Sigmoid colon (tissue), 7 donors: ENCODE measurements at regions of chr3 and their contacts with region 1.

Region 1: DNA sequence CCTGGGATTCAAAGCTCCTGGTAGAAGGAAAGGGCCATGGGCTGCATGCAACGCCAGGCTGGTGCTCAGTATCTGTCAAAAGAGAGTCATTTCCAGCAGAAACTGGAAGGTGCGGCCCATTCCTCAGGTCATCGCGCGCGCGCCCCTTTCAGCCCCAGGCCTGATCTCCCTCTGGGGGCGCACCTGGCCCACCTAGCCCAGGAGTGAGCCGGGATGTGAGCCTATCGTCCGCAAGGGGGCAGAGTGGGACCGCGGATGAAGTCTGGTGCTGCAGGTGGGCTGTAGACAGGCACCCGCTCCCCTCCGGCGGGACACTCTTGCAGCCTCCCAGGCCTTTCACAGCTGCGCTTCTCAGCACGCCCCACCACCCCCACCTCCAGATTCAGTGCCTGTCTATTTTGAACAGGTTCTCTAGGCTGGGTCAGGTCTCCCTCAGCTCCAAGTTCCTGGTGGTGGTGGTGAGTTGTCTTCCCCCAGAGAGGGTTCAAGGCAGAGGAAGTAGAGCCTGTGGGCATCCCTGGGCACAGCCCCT is 5.8 kb upstream of the RPL29 start:
- DNase-seq: peak; percentile 85
- H3K4me3 ChIP-seq: no peak overlapping the region
- H3K27ac ChIP-seq: no peak overlapping the region
- H3K4me1 ChIP-seq: peaks cover 0 to 19% (median 15%) of the 10 kb centered on the region in 4 donors
- H3K27me3 ChIP-seq: peaks cover 0 to 12% (median 0%) of the 10 kb centered on the region in 3 donors
- CTCF ChIP-seq: peak; percentile 85 to 94 (median 92)
- EP300 ChIP-seq: no peak
- POLR2A ChIP-seq: no peak

Region 2: DNA sequence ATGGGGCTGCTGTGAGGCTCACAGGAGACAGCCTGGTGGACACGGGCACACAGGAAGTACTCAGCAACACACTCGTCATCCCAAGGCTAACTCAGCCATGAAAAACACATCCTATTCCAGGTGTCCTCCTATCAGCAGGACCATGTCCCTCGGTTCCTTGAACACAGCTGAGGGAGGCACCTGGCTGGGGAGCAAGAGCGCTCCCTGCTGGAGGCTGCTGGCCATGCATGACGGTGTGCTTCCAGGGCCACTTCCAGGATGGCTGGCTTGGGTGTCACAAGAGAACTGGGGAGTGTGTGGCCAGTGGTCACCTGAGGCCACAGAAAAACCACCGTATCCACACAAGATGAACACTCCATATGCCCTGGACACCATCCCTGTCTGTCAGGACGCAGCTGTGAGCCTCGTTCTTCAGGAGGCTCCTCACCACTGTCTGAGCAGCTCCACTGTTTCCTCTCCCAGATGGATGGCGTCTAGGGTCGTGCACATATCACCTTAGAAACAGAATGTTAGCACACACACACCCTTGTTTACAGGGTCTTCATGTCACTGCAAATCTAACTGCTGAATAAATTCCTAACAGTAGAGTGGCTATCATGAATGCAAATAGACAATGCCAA is 121.7 kb after region 1 on chr3:
- intact Hi-C with region 1: loop called (anchors 1 kb)
- DNase-seq: peak; percentile 84
- H3K4me3 ChIP-seq: no peak overlapping the region
- H3K27ac ChIP-seq: no peak overlapping the region
- H3K4me1 ChIP-seq: peaks cover 0 to 14% (median 5%) of the 10 kb centered on the region in 4 donors
- H3K27me3 ChIP-seq: no peaks in the 10 kb centered on the region
- CTCF ChIP-seq: peak; percentile 91 to 94 (median 93)
- EP300 ChIP-seq: no peak
- POLR2A ChIP-seq: no peak

Region 3: GRCh38 chr3:52144034-52144795 is 142.7 kb after region 1 on chr3:
- intact Hi-C with region 1: loop called (anchors 1 kb)
- DNase-seq: peak; percentile 93
- H3K4me3 ChIP-seq: no peak overlapping the region
- H3K27ac ChIP-seq: no peak overlapping the region
- H3K4me1 ChIP-seq: peaks cover 0 to 5% (median 2%) of the 10 kb centered on the region in 4 donors
- H3K27me3 ChIP-seq: no peaks in the 10 kb centered on the region
- CTCF ChIP-seq: peak; percentile 91 to 98 (median 95)
- EP300 ChIP-seq: no peak
- POLR2A ChIP-seq: no peak

Region 4: GRCh38 chr3:52310861-52311575 is 309.5 kb after region 1 on chr3:
- intact Hi-C with region 1: no loop called
- DNase-seq: no peak
- H3K4me3 ChIP-seq: no peak overlapping the region
- H3K27ac ChIP-seq: no peak overlapping the region
- H3K4me1 ChIP-seq: peaks cover 0 to 5% (median 0%) of the 10 kb centered on the region in 4 donors
- H3K27me3 ChIP-seq: no peaks in the 10 kb centered on the region
- CTCF ChIP-seq: no peak
- EP300 ChIP-seq: no peak
- POLR2A ChIP-seq: no peak